A549 (cell line): ENCODE measurements at regions of chr10 and their contacts with region 1.

Region 1: DNA sequence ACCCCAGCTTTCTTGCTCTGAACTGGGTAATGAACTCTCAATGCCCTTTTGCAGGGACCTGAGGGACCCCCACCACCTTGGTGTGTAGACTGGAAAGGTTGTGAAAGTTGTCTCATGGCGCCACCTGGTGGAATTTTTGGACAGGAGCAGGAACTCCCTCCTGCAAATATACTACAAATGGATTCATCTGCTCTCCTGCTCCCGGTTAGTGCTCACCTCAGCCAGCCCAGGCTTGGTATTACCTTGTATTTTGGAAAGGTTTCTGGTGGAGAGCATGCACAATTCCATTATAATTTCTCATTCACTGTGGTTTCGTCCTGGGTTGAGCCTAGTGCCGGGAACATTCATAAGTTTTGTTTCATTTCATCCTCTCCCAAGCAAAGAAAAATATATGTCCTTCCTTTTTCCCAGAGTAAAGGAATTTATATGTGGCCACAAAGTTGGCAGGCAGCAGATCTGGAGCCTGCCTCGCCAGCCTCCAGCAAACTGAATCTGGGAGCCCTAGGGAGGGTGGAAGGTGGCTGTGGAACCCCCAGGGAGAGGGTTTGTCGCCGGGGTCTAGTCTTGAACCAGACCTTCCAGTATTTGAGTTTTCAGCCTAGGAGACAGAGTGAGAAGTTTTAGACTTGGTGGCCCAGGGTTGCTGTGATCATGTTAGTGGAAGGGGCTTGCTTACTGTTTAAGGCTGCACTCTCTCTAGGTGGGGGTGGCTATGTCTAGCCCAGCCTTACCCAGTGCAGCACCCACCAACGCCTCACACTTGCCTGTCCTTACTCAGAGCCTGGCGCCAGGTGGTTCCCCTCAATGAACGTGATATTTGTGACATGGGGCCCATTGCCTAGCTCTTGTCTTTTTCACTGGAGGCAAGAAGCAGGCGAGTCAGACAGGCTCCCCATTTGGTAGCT is 9.5 kb downstream of the FAM241B start:
- DNase-seq: peak; percentile 73 to 80
- ATAC-seq: peak; percentile 58 to 84
- H3K4me3 ChIP-seq: no peak overlapping the region
- H3K27ac ChIP-seq: no peak overlapping the region
- H3K4me1 ChIP-seq: no peaks in the 10 kb centered on the region
- CTCF ChIP-seq: peak; percentile 95
- EP300 ChIP-seq: no peak
- POLR2A ChIP-seq: no peak
- RAD21 ChIP-seq: peak; percentile 93

Region 2: DNA sequence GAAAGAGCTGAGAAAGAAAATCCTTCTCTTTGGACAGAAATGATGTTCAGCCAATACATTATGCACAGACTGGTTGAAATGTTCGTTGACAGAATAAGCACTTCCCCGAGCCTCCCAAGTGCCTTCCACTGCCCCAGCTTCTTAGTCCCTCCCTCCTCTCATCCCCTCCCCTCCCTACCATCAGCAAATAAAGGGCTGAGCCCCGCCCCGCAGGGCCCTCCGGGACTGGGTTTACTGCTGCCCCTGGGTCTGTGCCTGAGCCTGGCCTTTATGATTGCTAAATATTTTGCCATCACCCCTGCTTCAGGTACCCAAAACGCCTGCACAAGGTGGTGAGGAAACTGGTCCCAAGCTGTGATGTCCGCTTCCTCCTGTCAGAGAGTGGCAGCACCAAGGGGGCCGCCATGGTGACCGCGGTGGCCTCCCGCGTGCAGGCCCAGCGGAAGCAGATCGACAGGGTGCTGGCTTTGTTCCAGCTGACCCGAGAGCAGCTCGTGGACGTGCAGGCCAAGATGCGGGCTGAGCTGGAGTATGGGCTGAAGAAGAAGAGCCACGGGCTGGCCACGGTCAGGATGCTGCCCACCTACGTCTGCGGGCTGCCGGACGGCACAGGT is 391.3 kb before region 1 on chr10:
- CTCF ChIA-PET with region 1: no interaction called
- POLR2A ChIA-PET with region 1: no interaction called
- DNase-seq: no peak
- ATAC-seq: no peak
- H3K4me3 ChIP-seq: no peak overlapping the region
- H3K27ac ChIP-seq: no peak overlapping the region
- H3K4me1 ChIP-seq: no peaks in the 10 kb centered on the region
- CTCF ChIP-seq: no peak
- EP300 ChIP-seq: no peak
- POLR2A ChIP-seq: no peak
- RAD21 ChIP-seq: no peak

Region 3: DNA sequence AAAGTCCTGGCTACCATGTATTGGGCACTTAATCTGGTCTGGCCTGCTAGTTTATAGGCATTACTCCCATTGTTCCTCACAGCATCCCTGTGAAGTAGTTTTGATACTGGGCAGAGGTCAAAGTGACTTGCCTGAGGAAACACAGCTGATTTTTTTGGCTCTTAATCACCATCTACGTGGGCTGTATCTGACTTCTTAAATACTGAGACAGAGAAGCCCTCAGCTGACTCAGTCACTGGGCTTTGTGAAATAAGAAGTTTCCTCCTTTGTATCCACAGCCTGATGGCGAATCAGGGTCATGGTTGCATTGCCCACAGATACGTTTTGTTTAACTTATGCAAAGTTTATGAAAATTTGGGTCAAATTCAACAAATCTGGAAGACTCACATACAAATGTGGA is 236.0 kb before region 1 on chr10:
- CTCF ChIA-PET with region 1: interaction called, 107 read pairs
- POLR2A ChIA-PET with region 1: interaction called, 10 read pairs
- DNase-seq: no peak
- ATAC-seq: no peak
- H3K4me3 ChIP-seq: no peak overlapping the region
- H3K27ac ChIP-seq: no peak overlapping the region
- H3K4me1 ChIP-seq: peaks cover 8% of the 10 kb centered on the region
- CTCF ChIP-seq: no peak
- EP300 ChIP-seq: no peak
- POLR2A ChIP-seq: no peak
- RAD21 ChIP-seq: no peak

Region 4: DNA sequence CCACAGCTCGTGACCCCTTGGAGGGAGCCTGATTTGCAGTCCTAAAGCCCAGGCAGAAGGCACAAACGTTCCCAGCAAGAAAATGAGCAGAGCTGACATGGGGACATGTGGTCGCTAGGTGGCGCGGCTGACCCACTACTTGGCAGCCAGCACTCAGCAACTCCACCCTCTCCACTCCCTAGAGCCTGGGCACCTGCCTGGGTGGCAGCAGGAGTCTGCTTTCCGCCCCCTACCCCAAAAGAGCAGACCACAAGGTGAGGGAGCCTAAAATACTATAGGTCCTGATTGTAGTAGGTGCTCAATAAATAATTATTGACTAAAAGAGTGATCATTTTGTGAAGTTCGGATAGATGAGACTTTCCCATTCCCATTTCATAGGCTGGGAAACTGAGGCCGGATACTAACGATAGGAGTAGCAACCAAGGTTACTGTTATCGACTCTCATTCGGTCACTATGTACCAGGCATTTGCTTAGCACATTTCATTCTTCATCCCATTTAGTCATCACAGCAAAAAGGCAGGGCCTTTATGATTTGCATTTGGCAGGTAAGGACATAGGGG is 123.8 kb before region 1 on chr10:
- CTCF ChIA-PET with region 1: interaction called, 385 read pairs
- POLR2A ChIA-PET with region 1: interaction called, 13 read pairs
- DNase-seq: peak; percentile 78 to 87
- ATAC-seq: peak; percentile 96 to 97
- H3K4me3 ChIP-seq: no peak overlapping the region
- H3K27ac ChIP-seq: no peak overlapping the region
- H3K4me1 ChIP-seq: no peaks in the 10 kb centered on the region
- CTCF ChIP-seq: peak; percentile 82
- EP300 ChIP-seq: no peak
- POLR2A ChIP-seq: no peak
- RAD21 ChIP-seq: peak; percentile 88 to 90

Region 5: GRCh38 chr10:69527961-69528360 is 111.6 kb before region 1 on chr10:
- CTCF ChIA-PET with region 1: interaction called, 10 read pairs
- POLR2A ChIA-PET with region 1: interaction called, 4 read pairs
- DNase-seq: no peak
- ATAC-seq: no peak
- H3K4me3 ChIP-seq: no peak overlapping the region
- H3K27ac ChIP-seq: no peak overlapping the region
- H3K4me1 ChIP-seq: no peaks in the 10 kb centered on the region
- CTCF ChIP-seq: no peak
- EP300 ChIP-seq: no peak
- POLR2A ChIP-seq: no peak
- RAD21 ChIP-seq: no peak